ENCODE measurements at regions of chr5 and their contacts with region 1.

Region 1: DNA sequence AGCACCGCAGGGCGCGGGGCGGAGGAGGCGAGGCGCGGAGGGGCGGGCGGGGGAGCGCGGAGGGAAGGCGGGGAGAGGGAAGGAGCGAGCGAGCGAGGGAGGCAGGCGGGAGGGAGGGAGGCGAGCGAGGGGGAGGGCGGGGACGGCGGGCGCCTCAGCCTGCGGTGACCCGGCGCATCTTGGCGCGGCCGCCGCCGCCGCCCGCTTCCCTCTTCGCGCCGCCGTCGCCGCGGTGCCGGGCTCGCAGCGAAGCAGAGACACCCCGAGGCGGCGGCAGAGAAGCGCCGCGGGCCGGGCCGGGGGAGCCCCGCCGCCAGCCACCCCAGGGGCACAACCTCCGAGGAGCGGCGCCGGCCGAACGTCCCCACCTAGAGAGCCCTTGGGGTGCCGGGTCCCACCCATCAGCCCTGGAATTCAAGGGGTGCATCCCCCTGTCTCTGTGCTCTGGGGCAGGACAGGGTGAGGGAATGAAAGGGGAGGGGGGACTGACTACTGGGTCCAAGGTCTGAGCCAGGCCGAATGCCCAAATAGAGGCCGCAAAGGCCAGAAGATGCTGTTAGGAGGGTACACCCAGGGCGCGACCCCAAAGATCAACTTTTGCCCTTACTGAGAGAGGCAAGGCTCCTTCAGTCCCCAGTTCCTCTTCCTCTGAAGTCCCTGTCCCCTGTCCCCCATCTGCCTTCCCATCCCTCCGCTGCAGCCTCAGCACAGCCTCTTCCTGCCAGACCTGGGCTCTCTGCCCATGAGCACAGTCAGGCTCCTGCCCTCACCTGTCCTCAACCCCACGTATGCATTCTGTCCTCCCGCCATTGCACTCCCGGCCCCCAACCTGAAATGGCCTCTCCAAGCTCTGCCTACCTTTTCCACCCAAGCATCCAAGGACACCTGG is at the start of gene ADAMTS2:
- DNase-seq: peak; percentile 56
- ATAC-seq: peak; percentile 61
- H3K4me3 ChIP-seq: peak within 1 kb of the TSS; percentile 93
- H3K27ac ChIP-seq: peak within 1 kb of the TSS; percentile 74
- H3K4me1 ChIP-seq: peaks cover 15% of the 10 kb centered on the region
- H3K27me3 ChIP-seq: no peaks in the 10 kb centered on the region; the same call in 1 of the 2 replicates
- CTCF ChIP-seq: 0 out of 2 replicates have a peak, but pooled peaks have one; percentile 19
- POLR2A ChIP-seq: no peak
- RAD21 ChIP-seq: peak; percentile 34; the same call in 1 of the 2 replicates
- total RNA-seq, gene ADAMTS2: 18.3 and 19.0 TPM in 2 replicates

Region 2: DNA sequence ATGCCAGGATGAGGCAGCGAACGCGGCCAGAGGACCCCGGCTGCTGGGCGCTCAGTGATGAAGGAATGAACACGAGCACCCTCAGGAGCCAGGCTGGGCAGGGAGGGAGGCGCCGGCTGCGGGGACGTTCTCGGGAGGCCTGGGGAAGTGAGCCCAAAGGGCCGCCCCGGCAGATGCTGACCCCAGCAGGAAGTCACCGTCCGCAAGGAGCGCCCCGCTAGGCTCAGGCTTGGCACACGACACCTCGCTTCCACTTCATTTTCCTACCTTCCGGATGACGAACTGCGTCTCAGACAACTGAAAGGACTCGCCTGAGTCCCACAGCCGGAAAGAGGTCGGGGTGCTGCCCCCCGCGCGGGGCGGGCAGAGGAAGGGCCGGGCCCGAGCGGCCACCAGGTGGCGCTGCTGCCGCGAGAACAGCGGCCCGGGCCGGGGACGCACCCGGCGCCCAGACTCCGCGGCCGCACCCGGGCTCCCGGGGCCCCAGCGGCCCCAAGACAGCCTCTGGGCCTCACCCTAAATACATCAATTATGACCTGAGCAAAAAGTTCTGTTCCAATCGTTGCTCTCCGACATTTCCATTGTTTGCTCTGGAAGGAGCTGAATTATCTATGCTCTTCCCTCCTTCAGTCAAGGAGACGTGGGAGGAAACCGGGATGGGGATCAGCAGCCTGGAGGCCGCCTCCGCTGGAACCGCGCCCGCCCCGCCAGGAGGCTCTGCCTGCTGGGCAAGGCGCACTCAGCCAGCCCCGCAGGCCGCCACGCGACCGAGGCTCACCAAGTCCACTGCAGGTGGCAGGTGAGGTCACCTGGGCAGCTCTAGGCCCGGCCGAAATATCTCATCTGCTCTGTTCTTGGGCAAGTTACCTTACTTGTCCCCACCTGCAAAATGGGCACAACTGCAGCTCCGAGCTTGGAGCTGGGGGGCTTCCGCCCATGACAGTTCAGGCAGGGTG is 178.5 kb before region 1 on chr5:
- CTCF ChIA-PET with region 1: interaction called, 9 read pairs
- POLR2A ChIA-PET with region 1: no interaction called
- dilution Hi-C with region 1: no loop called
- in situ Hi-C with region 1: loop called (anchors 5 kb)
- intact Hi-C with region 1: loop called (anchors 1 kb)
- DNase-seq: peak; percentile 27
- ATAC-seq: peak; percentile 93
- H3K4me3 ChIP-seq: no peak overlapping the region
- H3K27ac ChIP-seq: no peak overlapping the region
- H3K4me1 ChIP-seq: no peaks in the 10 kb centered on the region
- H3K27me3 ChIP-seq: no peaks in the 10 kb centered on the region
- CTCF ChIP-seq: peak; percentile 91
- POLR2A ChIP-seq: 0 out of 2 replicates have a peak, but pooled peaks have one; percentile 16
- RAD21 ChIP-seq: peak; percentile 90

Region 3: DNA sequence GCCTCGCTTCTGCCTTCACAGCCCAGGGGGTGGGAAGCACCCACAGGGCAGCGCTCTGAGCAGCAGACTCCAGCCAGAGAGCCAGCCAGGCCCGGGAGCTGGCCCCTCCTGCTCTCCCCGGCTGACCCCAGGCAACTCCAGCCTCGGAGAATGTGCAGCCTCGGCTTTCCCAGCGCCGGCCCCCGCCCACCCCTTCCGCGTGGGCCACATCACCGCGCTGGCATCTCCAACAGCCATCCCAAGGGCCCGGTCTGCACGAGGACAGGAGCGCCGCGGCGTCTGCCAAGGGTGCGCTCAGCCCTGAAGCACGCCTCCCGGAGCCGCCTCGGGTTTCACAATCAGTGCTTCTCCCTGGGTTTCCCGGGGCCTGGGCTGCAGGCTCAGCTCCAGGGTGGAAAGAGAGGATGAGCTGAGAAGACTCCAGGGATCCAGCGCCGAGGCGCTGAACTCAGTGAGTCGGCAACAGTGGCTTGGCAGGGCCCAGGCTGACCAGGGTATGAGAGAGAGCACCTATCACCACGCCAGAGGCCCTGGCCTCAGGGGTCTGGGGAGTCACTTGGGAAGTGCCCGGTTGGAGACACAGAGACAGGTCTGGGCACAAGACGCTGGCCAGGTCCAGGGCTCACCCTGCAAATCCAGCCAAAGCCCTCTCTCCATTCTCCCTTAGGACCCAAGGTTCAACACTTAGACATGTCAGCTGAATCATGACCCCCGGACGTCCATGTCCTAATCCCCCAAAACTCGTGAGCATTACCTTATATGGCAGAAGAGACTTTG is 80.0 kb before region 1 on chr5:
- CTCF ChIA-PET with region 1: no interaction called
- POLR2A ChIA-PET with region 1: no interaction called
- dilution Hi-C with region 1: no loop called
- in situ Hi-C with region 1: no loop called
- intact Hi-C with region 1: loop called (anchors 2 kb)
- DNase-seq: peak; percentile 99
- ATAC-seq: peak; percentile 90
- H3K4me3 ChIP-seq: no peak overlapping the region
- H3K27ac ChIP-seq: peak overlapping the region; percentile 98
- H3K4me1 ChIP-seq: peaks cover 56% of the 10 kb centered on the region
- H3K27me3 ChIP-seq: no peaks in the 10 kb centered on the region
- CTCF ChIP-seq: no peak; the same call in 1 of the 2 replicates
- POLR2A ChIP-seq: peak; percentile 83
- RAD21 ChIP-seq: peak; percentile 25

Region 4: DNA sequence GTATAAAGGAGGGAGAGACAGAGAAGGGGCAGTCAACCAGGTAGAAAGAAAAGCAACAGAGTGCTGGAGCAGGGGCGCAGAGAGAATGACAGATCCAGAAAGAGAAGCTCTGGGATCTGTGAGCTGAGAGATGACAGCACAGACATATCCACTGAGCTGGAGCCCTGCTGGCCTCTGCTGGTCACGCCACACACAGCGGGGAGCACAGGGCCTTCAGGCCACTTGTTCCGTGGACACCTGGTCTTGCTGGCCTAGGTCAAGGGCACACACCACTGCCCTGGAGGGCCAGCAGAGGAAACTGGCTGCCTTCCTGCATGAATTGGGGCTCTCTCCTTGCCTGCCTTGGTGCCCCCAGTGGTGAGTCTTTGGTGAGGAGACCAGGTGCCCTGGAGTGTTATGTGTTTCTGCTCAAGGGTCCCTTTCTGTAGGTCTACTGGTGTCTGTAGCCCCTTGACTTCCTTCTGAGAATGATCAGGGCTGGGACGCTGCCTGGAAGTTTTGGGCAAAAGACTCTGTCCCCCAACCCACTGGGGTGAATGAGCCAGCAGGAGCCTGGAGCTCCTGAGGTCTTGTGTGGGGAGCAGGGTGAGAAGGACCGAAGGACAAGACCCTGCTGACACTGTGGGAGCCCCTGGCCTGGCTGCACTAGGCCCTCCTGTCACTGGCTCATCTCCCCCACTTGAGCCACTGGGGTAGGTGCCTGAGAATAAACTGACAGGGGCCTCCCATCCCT is 58.8 kb after region 1 on chr5:
- CTCF ChIA-PET with region 1: interaction called, 3 read pairs
- POLR2A ChIA-PET with region 1: no interaction called
- dilution Hi-C with region 1: no loop called
- in situ Hi-C with region 1: no loop called
- intact Hi-C with region 1: loop called (anchors 1 kb)
- DNase-seq: peak; percentile 42
- ATAC-seq: peak; percentile 94
- H3K4me3 ChIP-seq: no peak overlapping the region
- H3K27ac ChIP-seq: no peak overlapping the region
- H3K4me1 ChIP-seq: no peaks in the 10 kb centered on the region; the same call in 1 of the 2 replicates
- H3K27me3 ChIP-seq: no peaks in the 10 kb centered on the region
- CTCF ChIP-seq: peak; percentile 57
- POLR2A ChIP-seq: no peak
- RAD21 ChIP-seq: peak; percentile 70

Region 5: DNA sequence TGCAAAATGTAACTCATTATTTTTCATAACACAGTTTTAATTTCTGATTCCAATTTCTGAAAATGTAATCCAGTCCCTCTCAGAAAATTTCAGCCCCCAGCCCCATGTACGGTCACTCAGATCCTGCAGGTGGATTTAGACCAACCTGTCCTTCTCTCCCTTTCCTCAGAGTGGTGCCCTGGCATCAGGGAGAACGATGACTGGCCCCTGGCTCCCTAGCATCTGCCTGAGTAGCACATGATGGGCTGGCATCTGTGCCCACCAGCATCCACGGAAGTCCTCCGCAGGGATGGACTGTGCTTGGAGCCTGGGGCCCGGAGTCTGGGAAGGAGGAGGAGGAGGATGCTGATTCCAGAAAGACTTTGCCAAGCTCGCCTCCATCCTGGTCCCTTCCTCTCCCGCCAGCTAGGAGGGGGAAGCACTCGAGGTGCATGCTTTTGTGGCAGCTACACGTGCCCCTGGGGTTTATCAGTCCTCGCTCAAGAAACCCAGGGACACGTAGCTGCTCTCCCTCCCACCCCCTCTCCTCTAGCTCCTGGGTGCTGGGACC is 150.3 kb after region 1 on chr5:
- CTCF ChIA-PET with region 1: interaction called, 4 read pairs
- POLR2A ChIA-PET with region 1: no interaction called
- dilution Hi-C with region 1: no loop called
- in situ Hi-C with region 1: loop called (anchors 10 kb)
- intact Hi-C with region 1: no loop called
- DNase-seq: no peak
- ATAC-seq: no peak
- H3K4me3 ChIP-seq: no peak overlapping the region
- H3K27ac ChIP-seq: no peak overlapping the region
- H3K4me1 ChIP-seq: peaks cover 2% of the 10 kb centered on the region; the same call in 1 of the 2 replicates
- H3K27me3 ChIP-seq: peaks cover 8% of the 10 kb centered on the region
- CTCF ChIP-seq: 0 out of 2 replicates have a peak, but pooled peaks have one; percentile 8
- POLR2A ChIP-seq: no peak
- RAD21 ChIP-seq: peak; percentile 11; the same call in 1 of the 2 replicates